ENCODE measurements at regions of chrX and their contacts with region 1.

Region 1: GRCh38 chrX:11770320-11770719 is 12.3 kb downstream of the MSL3 start:
- DNase-seq: peak; percentile 62
- H3K4me3 Mint-ChIP-seq: no peak overlapping the region
- H3K27ac Mint-ChIP-seq: peak overlapping the region; percentile 87
- H3K4me1 Mint-ChIP-seq: peaks cover 35% of the 10 kb centered on the region
- H3K27me3 Mint-ChIP-seq: no peaks in the 10 kb centered on the region

Region 2: GRCh38 chrX:11724122-11725017 is 46.0 kb before region 1 on chrX:
- CTCF ChIA-PET with region 1: no interaction called
- POLR2A ChIA-PET with region 1: no interaction called
- intact Hi-C with region 1: loop called (anchors 1 kb)
- DNase-seq: peak; percentile 10
- H3K4me3 Mint-ChIP-seq: no peak overlapping the region
- H3K27ac Mint-ChIP-seq: no peak overlapping the region
- H3K4me1 Mint-ChIP-seq: no peaks in the 10 kb centered on the region
- H3K27me3 Mint-ChIP-seq: no peaks in the 10 kb centered on the region

Region 3: GRCh38 chrX:11758400-11759171 is 11.7 kb before region 1 on chrX:
- CTCF ChIA-PET with region 1: interaction called, 10 read pairs
- POLR2A ChIA-PET with region 1: interaction called, 4 read pairs
- intact Hi-C with region 1: loop called (anchors 1 kb)
- DNase-seq: peak; percentile 92
- H3K4me3 Mint-ChIP-seq: peak overlapping the region; percentile 95
- H3K27ac Mint-ChIP-seq: peak overlapping the region; percentile 99
- H3K4me1 Mint-ChIP-seq: peaks cover 23% of the 10 kb centered on the region
- H3K27me3 Mint-ChIP-seq: peaks cover under 1% of the 10 kb centered on the region

Region 4: GRCh38 chrX:11908371-11908770 is 138.1 kb after region 1 on chrX:
- CTCF ChIA-PET with region 1: no interaction called
- POLR2A ChIA-PET with region 1: no interaction called
- intact Hi-C with region 1: loop called (anchors 5 kb)
- DNase-seq: peak; percentile 15
- H3K4me3 Mint-ChIP-seq: no peak overlapping the region
- H3K27ac Mint-ChIP-seq: no peak overlapping the region
- H3K4me1 Mint-ChIP-seq: no peaks in the 10 kb centered on the region
- H3K27me3 Mint-ChIP-seq: peaks cover 2% of the 10 kb centered on the region

Region 5: GRCh38 chrX:11944501-11944900 is 174.2 kb after region 1 on chrX:
- CTCF ChIA-PET with region 1: no interaction called
- POLR2A ChIA-PET with region 1: no interaction called
- intact Hi-C with region 1: no loop called
- DNase-seq: no peak
- H3K4me3 Mint-ChIP-seq: no peak overlapping the region
- H3K27ac Mint-ChIP-seq: no peak overlapping the region
- H3K4me1 Mint-ChIP-seq: no peaks in the 10 kb centered on the region
- H3K27me3 Mint-ChIP-seq: peaks cover 1% of the 10 kb centered on the region